ENCODE measurements at regions of chr6 and their contacts with region 1.

Region 1: DNA sequence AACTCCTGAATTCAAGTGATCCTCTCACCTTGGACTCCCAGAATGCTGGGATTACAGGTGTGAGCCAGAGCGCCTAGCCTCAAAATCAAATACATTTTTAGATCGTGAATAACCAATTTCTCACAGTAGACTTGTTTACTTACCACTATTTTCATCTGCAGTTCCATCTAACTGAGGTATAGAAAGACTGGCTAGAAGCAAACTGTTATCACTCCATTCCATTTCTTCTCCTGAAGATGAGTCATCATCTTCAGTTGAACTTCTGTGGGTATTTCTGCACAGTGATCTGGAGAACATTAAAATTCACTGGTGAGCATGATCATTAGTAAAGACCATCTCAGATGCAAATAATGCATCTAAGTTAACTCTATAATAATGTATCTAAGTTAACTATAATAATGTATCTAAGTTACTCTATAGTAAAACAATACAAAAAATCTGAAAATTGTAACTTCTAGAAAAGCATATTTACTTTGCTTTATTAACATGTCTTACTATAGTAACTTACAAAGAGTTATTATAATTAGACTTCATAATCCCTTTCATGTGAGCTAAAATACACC is 105.4 kb downstream of the REV3L start:
- DNase-seq: no peak
- ATAC-seq: no peak
- H3K4me3 ChIP-seq: no peak overlapping the region
- H3K4me3 Mint-ChIP-seq: no peak overlapping the region
- H3K27ac ChIP-seq: no peak overlapping the region
- H3K27ac Mint-ChIP-seq: no peak overlapping the region
- H3K4me1 ChIP-seq: no peaks in the 10 kb centered on the region
- H3K4me1 Mint-ChIP-seq: no peaks in the 10 kb centered on the region
- H3K27me3 ChIP-seq: no peaks in the 10 kb centered on the region
- H3K27me3 Mint-ChIP-seq: no peaks in the 10 kb centered on the region
- CTCF ChIP-seq: no peak

Region 2: DNA sequence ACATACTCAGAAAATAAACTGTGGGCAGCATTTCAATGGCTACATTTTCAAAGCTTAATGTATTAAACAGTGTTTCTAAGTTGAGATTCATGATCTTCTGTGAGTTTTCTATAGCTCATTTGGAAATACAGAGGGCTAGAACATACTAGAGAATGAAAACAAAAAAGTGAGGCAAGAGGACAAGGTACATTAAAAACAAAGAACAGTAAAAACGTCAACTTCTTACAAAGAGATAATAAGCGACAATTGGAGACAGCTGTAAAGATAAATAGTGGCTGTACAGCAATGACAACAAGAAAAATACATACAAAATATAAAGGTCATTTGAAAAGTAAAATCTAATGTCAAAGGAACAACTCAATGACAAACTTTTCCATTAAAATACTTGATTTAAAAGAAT is 11.0 kb after region 1 on chr6:
- CTCF ChIA-PET with region 1: no interaction called
- POLR2A ChIA-PET with region 1: no interaction called
- intact Hi-C with region 1: no loop called
- DNase-seq: no peak
- ATAC-seq: no peak
- H3K4me3 ChIP-seq: no peak overlapping the region
- H3K4me3 Mint-ChIP-seq: no peak overlapping the region
- H3K27ac ChIP-seq: no peak overlapping the region
- H3K27ac Mint-ChIP-seq: no peak overlapping the region
- H3K4me1 ChIP-seq: no peaks in the 10 kb centered on the region
- H3K4me1 Mint-ChIP-seq: peaks cover 1% of the 10 kb centered on the region
- H3K27me3 ChIP-seq: no peaks in the 10 kb centered on the region
- H3K27me3 Mint-ChIP-seq: no peaks in the 10 kb centered on the region
- CTCF ChIP-seq: no peak

Region 3: DNA sequence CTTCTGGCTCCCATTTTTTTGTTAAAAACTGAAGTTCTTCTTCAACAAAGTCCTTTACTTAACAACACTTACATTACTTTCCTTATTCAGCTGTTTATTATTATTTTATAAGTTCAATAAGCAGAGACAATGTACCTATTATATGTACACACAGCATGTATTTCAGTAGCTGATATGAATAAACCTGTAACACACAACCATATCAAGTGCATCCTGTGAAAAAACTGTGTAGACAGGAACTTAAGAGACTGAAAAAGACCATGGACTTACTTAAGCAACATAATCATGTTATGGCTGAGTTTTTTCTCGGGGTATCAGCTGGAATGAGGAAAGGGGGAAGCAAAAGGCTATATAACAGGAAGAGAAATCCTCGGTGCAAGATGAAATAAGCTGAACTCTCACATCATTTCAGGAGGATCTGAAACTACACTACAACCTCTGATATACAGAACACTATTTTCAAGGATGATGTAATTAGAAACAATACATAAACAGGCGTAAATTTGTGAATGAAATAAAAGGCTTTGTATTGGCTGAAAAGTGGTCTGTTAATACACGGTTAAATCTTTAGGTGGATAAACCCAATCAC is 34.4 kb after region 1 on chr6:
- CTCF ChIA-PET with region 1: no interaction called
- POLR2A ChIA-PET with region 1: no interaction called
- intact Hi-C with region 1: loop called (anchors 5 kb)
- DNase-seq: peak; percentile 70
- ATAC-seq: peak; percentile 72
- H3K4me3 ChIP-seq: no peak overlapping the region
- H3K4me3 Mint-ChIP-seq: peak overlapping the region; percentile 40
- H3K27ac ChIP-seq: peak overlapping the region; percentile 50 to 70
- H3K27ac Mint-ChIP-seq: peak overlapping the region; percentile 68
- H3K4me1 ChIP-seq: peaks cover 22 to 23% of the 10 kb centered on the region in 2 donors
- H3K4me1 Mint-ChIP-seq: peaks cover 26% of the 10 kb centered on the region
- H3K27me3 ChIP-seq: no peaks in the 10 kb centered on the region
- H3K27me3 Mint-ChIP-seq: no peaks in the 10 kb centered on the region
- CTCF ChIP-seq: no peak